ENCODE measurements at regions of chr14 and their contacts with region 1.

Region 1: DNA sequence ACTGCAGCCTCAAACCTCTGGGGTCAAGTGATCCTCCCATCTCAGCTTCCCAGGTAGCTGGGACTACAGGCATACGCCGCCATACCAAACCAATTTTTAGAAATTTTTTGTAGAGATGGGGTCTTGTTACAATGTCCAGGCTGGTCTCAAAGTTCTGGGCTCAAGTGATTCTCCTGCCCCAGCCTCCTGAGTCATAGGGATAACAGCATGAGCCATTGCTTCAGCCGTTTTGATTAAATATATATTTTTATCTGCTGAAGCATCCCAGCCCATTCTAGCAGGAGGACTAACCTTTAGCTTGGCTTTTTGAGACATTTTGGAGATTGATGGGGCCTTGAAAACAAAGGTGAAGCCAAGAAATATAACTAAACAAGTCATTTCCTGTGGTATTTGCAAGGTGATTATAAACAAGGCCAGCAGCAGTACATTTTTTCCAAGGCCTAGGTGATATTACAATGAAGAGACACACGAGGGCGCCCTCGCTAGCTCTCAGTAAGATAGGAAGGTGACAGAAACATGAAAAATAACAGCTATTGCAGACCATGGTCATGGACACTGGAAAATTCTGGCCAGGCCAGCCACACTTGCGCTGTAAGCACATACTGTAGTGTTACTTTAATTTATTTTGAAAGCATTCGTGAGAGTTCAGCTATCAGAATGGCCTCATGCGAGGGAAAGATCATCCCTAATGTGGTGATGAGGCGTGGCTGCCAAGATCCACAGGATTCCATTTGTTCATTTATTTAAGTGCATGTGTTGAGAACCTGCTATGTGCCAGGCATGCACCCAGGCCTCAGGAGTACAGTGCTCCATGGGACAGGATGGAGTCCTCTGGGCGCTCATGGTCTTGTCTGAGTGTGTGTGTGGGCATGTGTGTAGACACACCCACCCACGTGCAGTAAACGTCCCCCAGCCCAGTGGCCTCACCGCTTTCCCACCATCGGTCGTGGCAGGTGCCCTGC is 63.5 kb downstream of the DGLUCY start:
- DNase-seq: peak; percentile 67
- H3K4me3 ChIP-seq: no peak overlapping the region; a peak in 1 of 4 replicates
- H3K27ac ChIP-seq: peak overlapping the region in 1 of 2 experiments; percentile 71; a peak in 2 of 4 replicates
- H3K4me1 ChIP-seq: peaks cover 0 to 8% of the 10 kb centered on the region in 2 experiments; a peak in 1 of 4 replicates
- H3K27me3 ChIP-seq: no peaks in the 10 kb centered on the region
- CTCF ChIP-seq: peak; percentile 86
- EP300 ChIP-seq: no peak
- RAD21 ChIP-seq: peak; percentile 96

Region 2: DNA sequence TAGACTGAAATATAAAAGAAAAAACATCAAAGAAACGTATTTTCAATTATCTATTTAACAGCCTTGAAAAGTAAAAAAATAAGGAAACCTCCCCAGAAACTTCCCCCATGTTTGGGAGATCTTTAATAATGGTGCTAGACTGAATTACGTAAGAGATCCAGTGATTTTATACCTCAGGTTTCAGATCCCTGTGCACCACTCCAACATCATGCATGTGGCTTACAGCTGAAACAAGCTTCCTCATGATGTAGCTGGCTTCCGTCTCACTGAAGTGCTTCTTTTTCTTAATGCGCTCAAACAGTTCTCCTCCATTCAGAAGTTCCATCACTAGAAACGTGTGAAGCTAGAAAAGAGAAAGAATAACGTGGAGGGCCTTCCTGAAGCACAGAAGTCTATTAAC is 283.1 kb before region 1 on chr14:
- CTCF ChIA-PET with region 1: interaction called, 270 read pairs
- POLR2A ChIA-PET with region 1: no interaction called
- DNase-seq: no peak
- H3K4me3 ChIP-seq: no peak overlapping the region
- H3K27ac ChIP-seq: no peak overlapping the region
- H3K4me1 ChIP-seq: peaks cover 0 to 3% of the 10 kb centered on the region in 2 experiments; a peak in 2 of 4 replicates
- H3K27me3 ChIP-seq: no peaks in the 10 kb centered on the region
- CTCF ChIP-seq: no peak
- EP300 ChIP-seq: no peak
- RAD21 ChIP-seq: no peak

Region 3: DNA sequence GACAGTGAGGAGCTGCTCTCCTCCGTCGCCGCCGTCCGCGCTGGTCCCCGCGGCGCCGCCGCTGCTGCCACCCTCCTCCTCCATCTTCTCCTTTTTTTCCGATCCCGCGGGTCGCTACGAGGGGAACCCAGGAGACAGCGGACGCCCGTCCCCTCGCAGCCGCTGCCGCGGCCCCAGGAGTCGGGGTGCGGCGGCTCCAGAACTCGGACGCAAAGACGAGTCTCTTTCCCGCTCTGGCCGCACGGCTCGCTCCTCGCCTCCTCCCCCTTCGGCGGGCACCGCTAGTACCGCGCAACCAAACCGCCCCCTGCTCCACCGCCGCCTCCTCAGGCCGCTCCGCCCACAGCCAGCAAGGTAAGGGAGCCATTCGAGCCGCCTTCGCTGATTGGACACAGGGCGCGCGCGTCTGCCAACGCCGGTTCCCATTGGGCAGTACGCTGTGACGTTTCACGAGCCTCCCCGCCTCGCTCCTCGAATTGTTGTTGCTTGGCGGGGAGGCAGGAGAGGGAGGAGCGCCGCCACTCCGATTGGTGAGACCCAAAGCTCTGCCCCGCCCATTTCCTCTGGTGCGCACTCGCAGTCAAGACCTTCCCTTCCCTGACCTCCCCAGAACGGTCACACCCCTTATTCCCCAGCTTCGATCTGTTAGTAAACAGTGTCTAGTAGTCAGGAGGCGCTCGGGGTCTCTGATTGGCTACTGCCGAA is 116.9 kb before region 1 on chr14 and contains the start of gene RPS6KA5:
- CTCF ChIA-PET with region 1: interaction called, 30 read pairs
- POLR2A ChIA-PET with region 1: interaction called, 3 read pairs
- DNase-seq: peak; percentile 92
- H3K4me3 ChIP-seq: peak within 1 kb of the TSS; percentile 68 to 93
- H3K27ac ChIP-seq: peak within 1 kb of the TSS; percentile 88 to 97
- H3K4me1 ChIP-seq: peaks cover 0 to 7% of the 10 kb centered on the region in 2 experiments; a peak in 3 of 4 replicates
- H3K27me3 ChIP-seq: no peaks in the 10 kb centered on the region
- CTCF ChIP-seq: no peak
- EP300 ChIP-seq: peak in 1 of 2 experiments; percentile 56; a peak in 1 of 4 replicates
- RAD21 ChIP-seq: peak; percentile 30; the same call in 1 of the 2 replicates
- polyA plus RNA-seq, gene RPS6KA5: 0.67 and 0.78 TPM in 2 replicates

Region 4: GRCh38 chr14:91094772-91095171 is 82.6 kb before region 1 on chr14:
- CTCF ChIA-PET with region 1: no interaction called
- POLR2A ChIA-PET with region 1: no interaction called
- DNase-seq: no peak
- H3K4me3 ChIP-seq: no peak overlapping the region
- H3K27ac ChIP-seq: no peak overlapping the region
- H3K4me1 ChIP-seq: no peaks in the 10 kb centered on the region
- H3K27me3 ChIP-seq: no peaks in the 10 kb centered on the region
- CTCF ChIP-seq: no peak
- EP300 ChIP-seq: no peak
- RAD21 ChIP-seq: no peak

Region 5: DNA sequence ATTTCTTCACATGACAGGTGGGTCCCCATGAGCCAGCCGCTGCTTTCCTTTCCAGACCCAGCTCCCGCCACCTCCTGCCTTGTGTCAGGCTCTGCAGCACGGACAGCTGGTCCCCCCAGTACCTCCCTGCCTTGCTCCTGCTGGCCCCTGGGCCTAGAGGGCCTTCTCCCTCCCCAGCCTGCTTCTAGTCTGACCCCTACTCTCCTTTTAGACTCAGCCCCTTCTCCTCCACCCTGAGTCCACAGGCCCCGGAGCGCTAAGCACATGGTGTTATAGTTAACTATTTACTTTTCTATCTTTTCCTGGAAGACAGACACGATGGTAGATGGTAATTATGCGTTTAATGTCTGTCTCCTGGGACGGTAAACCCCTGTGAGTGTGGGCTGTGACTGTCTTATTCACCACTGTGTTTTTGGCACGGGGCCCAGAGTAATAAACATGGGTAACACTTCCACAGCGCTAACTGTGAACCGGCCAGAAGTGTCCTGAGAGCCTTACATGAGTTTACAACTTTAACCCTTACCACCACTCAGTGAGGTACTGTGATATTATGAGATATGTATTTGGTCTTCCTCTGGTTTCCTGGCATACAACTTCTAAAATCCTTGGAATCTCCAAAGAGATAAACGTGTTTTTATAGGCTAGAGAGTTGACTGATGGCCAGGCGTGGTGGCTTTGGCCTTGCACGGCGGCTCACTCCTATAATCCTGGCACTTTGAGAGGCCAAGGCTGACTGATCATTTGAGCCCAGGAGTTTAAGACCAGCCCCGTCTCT is 22.3 kb before region 1 on chr14:
- CTCF ChIA-PET with region 1: interaction called, 26 read pairs
- POLR2A ChIA-PET with region 1: no interaction called
- DNase-seq: peak; percentile 40
- H3K4me3 ChIP-seq: no peak overlapping the region
- H3K27ac ChIP-seq: peak overlapping the region in 1 of 2 experiments; percentile 73; a peak in 2 of 4 replicates
- H3K4me1 ChIP-seq: peaks cover 11 to 12% of the 10 kb centered on the region in 2 experiments; a peak in 2 of 4 replicates
- H3K27me3 ChIP-seq: no peaks in the 10 kb centered on the region
- CTCF ChIP-seq: no peak
- EP300 ChIP-seq: no peak; a peak in 1 of 4 replicates
- RAD21 ChIP-seq: no peak

Region 6: GRCh38 chr14:91249841-91250616 is 72.7 kb after region 1 on chr14:
- CTCF ChIA-PET with region 1: interaction called, 30 read pairs
- POLR2A ChIA-PET with region 1: no interaction called
- DNase-seq: peak; percentile 88
- H3K4me3 ChIP-seq: no peak overlapping the region
- H3K27ac ChIP-seq: peak overlapping the region; percentile 24 to 99; a peak in 3 of 4 replicates
- H3K4me1 ChIP-seq: peaks cover 0 to 68% of the 10 kb centered on the region in 2 experiments; a peak in 2 of 4 replicates
- H3K27me3 ChIP-seq: no peaks in the 10 kb centered on the region
- CTCF ChIP-seq: no peak
- EP300 ChIP-seq: peak in 1 of 2 experiments; percentile 90; a peak in 2 of 4 replicates
- RAD21 ChIP-seq: peak; percentile 48

Region 7: GRCh38 chr14:91277546-91278382 is 100.4 kb after region 1 on chr14:
- CTCF ChIA-PET with region 1: interaction called, 391 read pairs
- POLR2A ChIA-PET with region 1: no interaction called
- DNase-seq: no peak
- H3K4me3 ChIP-seq: no peak overlapping the region
- H3K27ac ChIP-seq: peak overlapping the region in 1 of 2 experiments; percentile 51; a peak in 2 of 4 replicates
- H3K4me1 ChIP-seq: peaks cover 0 to 26% of the 10 kb centered on the region in 2 experiments; a peak in 1 of 4 replicates
- H3K27me3 ChIP-seq: no peaks in the 10 kb centered on the region
- CTCF ChIP-seq: no peak
- EP300 ChIP-seq: no peak
- RAD21 ChIP-seq: peak; percentile 31; the same call in 1 of the 2 replicates

Region 8: DNA sequence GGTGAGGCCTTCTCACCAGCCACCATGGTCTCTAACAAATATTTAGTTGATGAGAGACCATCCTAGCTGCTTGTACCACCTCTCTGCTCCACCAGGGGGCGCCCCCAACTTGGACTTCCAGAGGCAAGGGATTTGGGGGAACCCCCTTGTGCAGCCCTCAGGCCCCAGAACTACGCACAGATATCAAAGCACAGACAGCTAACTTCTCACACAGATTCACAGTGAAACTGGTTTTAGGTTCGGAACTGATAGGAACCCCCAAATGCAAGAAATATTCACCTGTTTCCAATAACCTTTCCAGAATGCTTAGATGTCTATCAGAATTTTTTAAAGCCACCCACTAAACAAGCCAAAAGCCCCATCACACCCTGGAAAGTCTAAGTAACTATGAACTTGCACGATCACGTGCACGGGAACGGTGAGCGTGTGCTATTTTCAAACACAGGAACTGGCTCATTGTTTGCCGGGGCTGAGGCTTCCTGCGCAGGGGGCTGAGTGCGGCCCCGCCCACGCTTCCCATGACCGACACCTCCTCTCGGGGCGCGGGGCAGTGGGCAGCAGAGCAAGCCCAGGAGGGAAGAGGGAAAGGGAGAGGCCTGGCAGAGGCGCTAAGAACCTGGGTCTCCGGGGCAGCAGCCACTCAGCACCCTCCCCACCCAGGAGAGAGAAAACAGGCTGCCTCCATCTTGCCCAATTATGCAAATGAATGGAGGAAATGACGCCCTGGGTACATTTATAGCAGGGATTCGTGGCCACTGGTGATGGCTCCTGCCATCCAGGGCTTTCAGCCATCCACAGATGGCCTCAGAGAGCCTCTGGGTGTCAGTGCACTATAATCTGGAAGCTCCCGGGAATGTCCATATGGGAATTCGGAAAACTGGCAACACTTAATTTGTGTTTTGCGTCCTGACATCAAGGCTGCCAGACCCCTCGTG is 146.6 kb after region 1 on chr14:
- CTCF ChIA-PET with region 1: interaction called, 11 read pairs
- POLR2A ChIA-PET with region 1: no interaction called
- DNase-seq: peak; percentile 81
- H3K4me3 ChIP-seq: peak overlapping the region; percentile 36 to 50; a peak in 3 of 4 replicates
- H3K27ac ChIP-seq: peak overlapping the region in 1 of 2 experiments; percentile 53; a peak in 2 of 4 replicates
- H3K4me1 ChIP-seq: peaks cover 0 to 58% of the 10 kb centered on the region in 2 experiments; a peak in 1 of 4 replicates
- H3K27me3 ChIP-seq: no peaks in the 10 kb centered on the region
- CTCF ChIP-seq: peak; percentile 99
- EP300 ChIP-seq: no peak
- RAD21 ChIP-seq: peak; percentile 89

Measured in SK-N-SH (cell line).